ENCODE measurements at regions of chr17 and their contacts with region 1.

Region 1: DNA sequence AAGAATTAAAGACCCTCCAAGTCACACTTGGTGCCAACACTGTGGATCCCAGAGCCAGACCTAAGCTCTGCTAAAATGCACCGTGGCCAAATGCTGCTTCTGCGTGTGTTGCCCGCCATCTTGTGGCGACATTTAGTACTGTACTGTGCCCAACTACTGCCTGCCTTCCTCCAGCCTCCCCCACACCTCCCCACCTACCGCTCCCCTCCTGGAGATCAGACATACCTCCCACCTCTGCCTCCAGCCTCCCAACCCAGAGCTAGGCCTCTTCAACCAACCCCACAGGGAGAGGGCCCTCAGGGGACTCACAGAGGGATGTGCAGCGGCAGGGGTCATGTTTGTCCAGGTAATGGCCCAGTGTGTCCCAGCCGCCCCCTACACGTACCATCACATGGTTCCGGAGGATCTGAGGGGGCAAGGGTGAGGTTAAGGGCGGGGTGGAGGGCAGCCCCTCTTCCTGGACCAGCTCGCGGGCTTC is 5.5 kb downstream of the GAS2L2 start:
- H3K4me3 ChIP-seq: no peak overlapping the region
- H3K27ac ChIP-seq: no peak overlapping the region
- H3K4me1 ChIP-seq: no peaks in the 10 kb centered on the region
- CTCF ChIP-seq: peak; percentile 97

Region 2: DNA sequence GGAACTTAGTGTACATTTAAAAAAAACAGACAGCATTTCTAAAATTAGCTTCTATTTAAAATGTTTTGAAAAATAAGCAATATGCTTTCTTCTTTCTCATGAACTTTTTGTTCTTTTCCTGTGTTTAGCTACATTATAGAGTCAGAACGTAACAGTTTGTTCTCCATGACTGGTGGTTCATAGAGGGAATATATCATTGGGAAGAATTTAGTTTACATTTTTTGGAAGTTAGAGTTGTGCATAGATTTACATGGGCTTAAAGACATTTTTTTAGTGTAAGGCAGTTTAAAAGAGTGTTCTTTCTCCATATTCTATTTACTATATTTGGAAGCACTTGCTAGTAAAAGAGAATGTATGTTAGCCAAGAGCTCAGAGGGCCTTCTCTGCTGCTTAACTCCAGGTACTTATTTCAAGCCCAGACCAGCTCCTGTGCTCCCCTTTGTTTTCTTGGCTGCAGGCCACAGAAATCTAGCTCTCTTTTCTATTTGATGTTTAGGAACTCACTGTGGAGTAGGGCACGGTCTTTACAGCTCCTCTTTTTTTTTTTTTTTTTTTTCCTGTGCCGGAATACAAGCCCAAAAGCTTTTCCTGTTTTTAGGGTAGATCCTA is 140.2 kb before region 1 on chr17:
- CTCF ChIA-PET with region 1: interaction called, 321 read pairs
- POLR2A ChIA-PET with region 1: interaction called, 3 read pairs
- H3K4me3 ChIP-seq: no peak overlapping the region
- H3K27ac ChIP-seq: 0 out of 2 replicates have a peak overlapping the region, but pooled peaks have one; percentile 16
- H3K4me1 ChIP-seq: no peaks in the 10 kb centered on the region
- CTCF ChIP-seq: no peak

Region 3: GRCh38 chr17:35709874-35710273 is 37.7 kb before region 1 on chr17:
- CTCF ChIA-PET with region 1: interaction called, 14 read pairs
- POLR2A ChIA-PET with region 1: no interaction called
- H3K4me3 ChIP-seq: no peak overlapping the region
- H3K27ac ChIP-seq: no peak overlapping the region
- H3K4me1 ChIP-seq: peaks cover 2% of the 10 kb centered on the region; the same call in 1 of the 2 replicates
- CTCF ChIP-seq: no peak

Region 4: GRCh38 chr17:35731239-35731931 is 16.2 kb before region 1 on chr17 and contains the start of gene RASL10B:
- CTCF ChIA-PET with region 1: interaction called, 44 read pairs
- POLR2A ChIA-PET with region 1: interaction called, 5 read pairs
- H3K4me3 ChIP-seq: peak within 1 kb of the TSS; percentile 38
- H3K27ac ChIP-seq: peak within 1 kb of the TSS; percentile 63; the same call in 1 of the 2 replicates
- H3K4me1 ChIP-seq: peaks cover 28% of the 10 kb centered on the region
- CTCF ChIP-seq: no peak

Region 5: GRCh38 chr17:35774499-35774898 is 26.9 kb after region 1 on chr17:
- CTCF ChIA-PET with region 1: no interaction called
- POLR2A ChIA-PET with region 1: no interaction called
- H3K4me3 ChIP-seq: no peak overlapping the region
- H3K27ac ChIP-seq: no peak overlapping the region; the same call in 1 of the 2 replicates
- H3K4me1 ChIP-seq: peaks cover 10% of the 10 kb centered on the region; the same call in 1 of the 2 replicates
- CTCF ChIP-seq: no peak

Region 6: GRCh38 chr17:35849469-35850348 is 102.1 kb after region 1 on chr17:
- CTCF ChIA-PET with region 1: no interaction called
- POLR2A ChIA-PET with region 1: no interaction called
- H3K4me3 ChIP-seq: no peak overlapping the region
- H3K27ac ChIP-seq: no peak overlapping the region
- H3K4me1 ChIP-seq: no peaks in the 10 kb centered on the region
- CTCF ChIP-seq: peak; percentile 76